Right lobe of liver (tissue), 6 donors: ENCODE measurements at regions of chr13 and their contacts with region 1.

Region 1: GRCh38 chr13:110109910-110110309 is 197.0 kb downstream of the COL4A1 start:
- DNase-seq: no peak
- ATAC-seq: peak in 1 of 4 donors; percentile 6
- H3K4me3 ChIP-seq: no peak overlapping the region
- H3K27ac ChIP-seq: no peak overlapping the region
- H3K4me1 ChIP-seq: peaks cover 0 to 20% (median 7%) of the 10 kb centered on the region in 4 donors
- H3K27me3 ChIP-seq: no peaks in the 10 kb centered on the region
- CTCF ChIP-seq: no peak
- POLR2A ChIP-seq: no peak

Region 2: DNA sequence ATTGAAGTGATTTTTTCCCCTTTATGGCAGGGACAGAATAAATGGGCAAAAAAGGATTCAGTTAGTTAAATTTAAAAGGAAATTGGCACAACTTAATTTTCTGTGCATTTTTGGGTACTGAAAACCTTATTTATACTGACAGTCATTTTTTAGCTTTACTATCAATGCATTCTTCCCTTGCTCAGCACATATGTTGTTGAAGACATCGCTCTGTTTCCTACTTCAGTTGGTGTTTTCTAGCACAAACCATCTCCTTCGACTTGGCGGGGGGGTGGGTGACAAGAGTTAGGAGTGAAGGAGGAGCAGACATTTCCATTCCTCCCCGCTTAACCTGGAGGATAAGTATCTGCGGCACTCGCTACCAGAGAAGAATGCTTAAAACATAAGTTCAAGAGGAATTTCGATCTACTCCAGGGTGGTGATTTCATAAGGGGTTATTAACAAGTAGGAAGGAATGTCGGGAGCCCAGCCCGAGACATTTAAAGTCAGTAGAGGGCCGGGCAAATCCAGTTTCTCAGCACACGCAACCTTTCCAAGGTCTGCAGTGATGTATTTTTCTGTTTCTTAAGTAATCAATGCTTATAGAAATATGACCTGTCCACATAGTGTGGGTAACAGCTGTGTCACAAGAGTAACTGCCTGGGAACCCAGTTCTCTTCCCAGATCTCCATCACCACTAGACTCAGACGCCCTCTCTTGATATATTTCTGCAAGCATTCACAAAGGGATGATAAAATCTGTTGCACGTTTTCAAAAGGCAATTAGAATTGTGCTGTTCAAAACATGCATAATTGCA is 954.7 kb before region 1 on chr13:
- intact Hi-C with region 1: loop called in 1 of 2 experiments (anchors 5 kb)
- DNase-seq: no peak
- ATAC-seq: no peak
- H3K4me3 ChIP-seq: no peak overlapping the region
- H3K27ac ChIP-seq: no peak overlapping the region
- H3K4me1 ChIP-seq: no peaks in the 10 kb centered on the region
- H3K27me3 ChIP-seq: no peaks in the 10 kb centered on the region
- CTCF ChIP-seq: no peak
- POLR2A ChIP-seq: no peak

Region 3: GRCh38 chr13:110294146-110294545 is 184.2 kb after region 1 on chr13:
- intact Hi-C with region 1: no loop called
- DNase-seq: no peak
- ATAC-seq: no peak
- H3K4me3 ChIP-seq: no peak overlapping the region
- H3K27ac ChIP-seq: no peak overlapping the region
- H3K4me1 ChIP-seq: no peaks in the 10 kb centered on the region
- H3K27me3 ChIP-seq: no peaks in the 10 kb centered on the region
- CTCF ChIP-seq: no peak
- POLR2A ChIP-seq: no peak